ENCODE measurements at regions of chr22 and their contacts with region 1.

Region 1: GRCh38 chr22:17638432-17639246 is at the start of gene BCL2L13:
- DNase-seq: peak; percentile 84 to 97 (median 92)

Region 2: DNA sequence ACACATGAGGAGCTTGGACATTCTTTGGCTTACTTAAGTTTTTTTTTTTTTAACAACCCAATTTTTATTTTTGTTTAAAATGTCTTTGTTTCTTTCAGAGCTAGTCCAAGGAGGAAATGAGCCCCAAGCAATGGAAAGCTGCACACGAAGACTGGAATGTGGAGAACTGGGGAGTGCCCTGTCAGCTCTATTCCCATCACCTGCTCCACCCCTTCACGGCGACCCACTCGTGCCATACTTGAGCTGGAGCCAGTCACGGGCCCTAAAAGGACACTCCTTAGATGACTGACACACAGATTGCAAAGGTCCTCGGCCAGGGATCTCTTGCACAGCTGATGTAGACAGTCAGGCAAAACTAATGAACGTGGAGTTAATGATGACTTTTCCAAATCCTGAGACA is 85.9 kb before region 1 on chr22:
- intact Hi-C with region 1: no loop called
- DNase-seq: peak in 2 of 42 donors; percentile 7 to 33

Region 3: DNA sequence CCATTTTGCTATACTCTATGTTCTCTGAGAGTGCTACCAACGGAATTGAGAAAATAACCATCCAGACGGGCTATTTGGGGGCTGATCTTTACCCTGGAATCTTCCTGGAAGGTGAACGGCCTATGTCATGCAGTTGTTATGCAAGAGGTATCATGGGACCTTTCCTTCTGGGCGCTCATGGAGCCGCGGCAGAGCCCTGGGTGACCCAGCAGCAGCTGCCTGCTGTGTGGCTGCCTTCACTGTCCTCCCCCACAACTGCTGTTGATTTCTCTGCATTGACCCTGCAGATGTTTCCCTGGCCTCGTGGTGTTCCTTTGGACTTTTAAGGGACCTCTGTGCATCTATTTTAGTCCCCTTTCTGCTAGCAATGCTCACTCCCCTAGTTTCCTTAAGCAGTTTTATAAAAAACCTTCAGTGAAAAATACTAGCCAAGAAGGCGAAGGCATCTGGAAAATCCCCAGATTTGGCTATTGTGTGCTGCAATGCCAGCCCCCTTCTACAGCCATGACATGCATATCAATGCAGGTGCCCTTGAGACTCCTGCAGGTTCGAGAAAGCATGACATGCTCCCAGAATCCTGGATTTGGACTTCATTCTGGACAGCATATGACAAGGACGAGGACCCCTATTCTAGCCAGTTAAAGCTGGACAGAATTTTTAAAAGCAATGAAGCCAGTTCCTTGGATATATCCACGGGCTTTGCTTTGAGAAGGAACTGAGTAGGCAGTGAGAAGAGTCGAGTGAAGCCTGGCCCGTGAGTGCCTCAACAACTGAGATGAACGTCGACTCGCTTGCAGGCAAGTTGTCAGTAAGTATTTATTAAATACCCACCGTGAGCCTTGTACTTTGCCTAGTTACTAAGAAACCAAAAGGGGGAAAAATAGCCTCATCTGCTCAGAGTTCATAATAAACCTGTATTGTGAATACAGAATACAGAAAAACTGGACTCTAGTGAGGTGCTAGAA is 75.5 kb before region 1 on chr22 and contains the start of gene SLC25A18:
- intact Hi-C with region 1: loop called (anchors 2 kb)
- DNase-seq: peak in 32 of 42 donors; percentile 29 to 86 (median 52)

Region 4: DNA sequence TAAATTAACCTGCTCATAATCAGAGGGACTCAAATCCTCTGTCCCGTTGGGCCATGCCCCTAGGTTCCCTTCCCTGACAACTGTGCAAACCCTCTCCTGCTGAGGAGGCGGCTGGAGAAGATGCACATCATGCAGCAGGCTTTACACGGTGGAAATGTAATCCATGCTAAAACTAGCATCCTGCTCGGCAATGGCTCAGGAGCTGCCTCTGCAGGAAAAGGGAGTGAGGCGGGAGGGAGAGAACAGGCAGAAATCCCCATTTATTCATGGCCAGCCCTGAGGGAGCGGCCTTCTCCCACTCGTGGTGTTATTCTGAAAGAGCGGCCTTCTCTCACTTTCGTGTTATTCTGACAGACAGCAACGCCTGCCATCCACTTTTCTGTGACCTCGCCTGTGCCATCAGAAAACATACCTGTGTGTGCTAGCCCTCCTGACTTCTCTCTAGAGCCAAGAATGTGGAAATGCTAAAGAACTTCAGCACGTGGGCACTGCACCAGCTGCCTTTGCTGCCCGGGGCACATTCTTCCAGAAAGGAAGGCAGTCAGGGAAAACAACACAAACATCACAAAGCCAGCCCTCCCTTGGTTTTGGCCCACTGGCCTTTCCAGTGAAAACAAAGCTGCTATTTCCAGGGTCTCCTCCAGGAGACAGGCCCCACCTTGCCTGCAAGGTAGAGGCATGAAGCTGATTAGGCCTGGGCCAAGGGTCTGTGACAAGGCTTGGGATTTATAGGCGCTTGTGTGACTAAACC is 198.5 kb after region 1 on chr22:
- intact Hi-C with region 1: no loop called
- DNase-seq: peak in 21 of 42 donors; percentile 11 to 76 (median 38)